T-cell (primary cell): ENCODE measurements at regions of chr1 and their contacts with region 1.

Region 1: DNA sequence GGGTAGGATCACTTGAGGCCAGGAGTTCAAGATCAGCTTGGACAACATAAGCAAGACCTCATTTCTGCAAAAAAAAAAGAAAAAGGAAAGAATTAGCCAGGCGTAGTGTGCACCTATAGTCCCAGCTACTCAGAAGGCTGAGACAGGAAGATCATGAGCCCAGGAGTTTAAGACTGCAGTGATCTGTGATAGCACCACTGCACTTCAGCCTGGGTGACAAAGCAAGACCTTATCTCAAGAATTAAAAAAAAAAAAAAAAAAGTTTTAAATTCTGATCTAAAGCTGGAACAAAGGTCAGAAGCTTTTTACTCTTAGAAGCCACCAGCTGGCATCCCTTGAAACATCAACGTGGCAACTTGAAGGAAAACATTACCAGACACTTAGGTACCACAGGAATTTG is 45.3 kb downstream of the HENMT1 start:
- DNase-seq: no peak
- ATAC-seq: no peak
- H3K4me3 ChIP-seq: no peak overlapping the region
- H3K4me3 Mint-ChIP-seq: no peak overlapping the region
- H3K27ac ChIP-seq: no peak overlapping the region
- H3K27ac Mint-ChIP-seq: no peak overlapping the region
- H3K4me1 ChIP-seq: no peaks in the 10 kb centered on the region
- H3K4me1 Mint-ChIP-seq: no peaks in the 10 kb centered on the region
- H3K27me3 ChIP-seq: no peaks in the 10 kb centered on the region
- H3K27me3 Mint-ChIP-seq: no peaks in the 10 kb centered on the region

Region 2: DNA sequence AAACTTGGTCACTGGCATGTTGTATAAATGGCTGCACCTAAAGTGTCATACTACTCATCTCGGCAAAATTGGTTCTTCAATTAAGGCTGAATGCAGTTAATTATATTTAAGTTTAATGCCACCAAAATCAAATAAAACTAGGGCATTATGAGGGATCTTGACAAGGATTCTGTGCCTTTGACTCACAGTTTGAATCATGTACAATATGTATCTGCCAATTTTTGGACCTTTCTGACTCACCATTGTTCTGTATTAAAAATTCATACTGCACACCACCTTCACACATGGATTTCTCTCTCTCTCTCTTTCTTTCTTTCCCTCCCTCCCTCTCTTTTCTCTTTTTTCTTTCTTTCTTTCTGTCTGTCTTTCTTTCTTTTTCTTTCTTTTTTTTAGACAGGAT is 116.9 kb after region 1 on chr1:
- CTCF ChIA-PET with region 1: interaction called in 1 of 2 experiments, 10 read pairs
- POLR2A ChIA-PET with region 1: no interaction called
- DNase-seq: no peak
- ATAC-seq: no peak
- H3K4me3 ChIP-seq: no peak overlapping the region
- H3K4me3 Mint-ChIP-seq: no peak overlapping the region
- H3K27ac ChIP-seq: no peak overlapping the region
- H3K27ac Mint-ChIP-seq: no peak overlapping the region
- H3K4me1 ChIP-seq: no peaks in the 10 kb centered on the region
- H3K4me1 Mint-ChIP-seq: no peaks in the 10 kb centered on the region
- H3K27me3 ChIP-seq: peaks cover 4 to 12% of the 10 kb centered on the region in 2 experiments
- H3K27me3 Mint-ChIP-seq: peaks cover 8% of the 10 kb centered on the region in 2 donors